Common myeloid progenitor, CD34-positive (primary cell): ENCODE measurements at regions of chr5 and their contacts with region 1.

Region 1: GRCh38 chr5:151126199-151126645 is 31.4 kb downstream of the ANXA6 start:
- DNase-seq: peak; percentile 50 to 67 (median 58)
- H3K4me3 ChIP-seq: no peak overlapping the region
- H3K27ac ChIP-seq: peak overlapping the region in 1 of 2 experiments; percentile 2
- H3K4me1 ChIP-seq: peaks cover 0 to 21% (median 11%) of the 10 kb centered on the region in 4 experiments
- H3K27me3 ChIP-seq: no peaks in the 10 kb centered on the region

Region 2: GRCh38 chr5:151080623-151081430 is 45.4 kb before region 1 on chr5 and contains the start of gene TNIP1:
- CTCF ChIA-PET with region 1: interaction called, 1,757 read pairs
- POLR2A ChIA-PET with region 1: no interaction called
- DNase-seq: peak; percentile 89 to 96 (median 95)
- H3K4me3 ChIP-seq: peak within 1 kb of the TSS; percentile 77 to 90 (median 83)
- H3K27ac ChIP-seq: peak within 1 kb of the TSS; percentile 99
- H3K4me1 ChIP-seq: peaks cover 20 to 68% (median 57%) of the 10 kb centered on the region in 4 experiments
- H3K27me3 ChIP-seq: no peaks in the 10 kb centered on the region

Region 3: GRCh38 chr5:151141535-151141934 is 15.3 kb after region 1 on chr5:
- CTCF ChIA-PET with region 1: interaction called, 54 read pairs
- POLR2A ChIA-PET with region 1: interaction called, 3 read pairs
- DNase-seq: peak in 2 of 3 donors; percentile 35 to 43
- H3K4me3 ChIP-seq: peak overlapping the region in 2 of 7 experiments; percentile 6 to 21
- H3K27ac ChIP-seq: peak overlapping the region in 1 of 2 experiments; percentile 51
- H3K4me1 ChIP-seq: peaks cover 3 to 40% (median 16%) of the 10 kb centered on the region in 4 experiments
- H3K27me3 ChIP-seq: no peaks in the 10 kb centered on the region

Region 4: GRCh38 chr5:151157426-151158286 is 31.4 kb after region 1 on chr5 and contains the start of gene ANXA6:
- CTCF ChIA-PET with region 1: interaction called, 558 read pairs
- POLR2A ChIA-PET with region 1: interaction called, 4 read pairs
- DNase-seq: peak; percentile 64 to 81 (median 74)
- H3K4me3 ChIP-seq: peak within 1 kb of the TSS; percentile 77 to 94 (median 81)
- H3K27ac ChIP-seq: peak within 1 kb of the TSS; percentile 51 to 71
- H3K4me1 ChIP-seq: peaks cover 6 to 59% (median 56%) of the 10 kb centered on the region in 4 experiments
- H3K27me3 ChIP-seq: no peaks in the 10 kb centered on the region

Region 5: DNA sequence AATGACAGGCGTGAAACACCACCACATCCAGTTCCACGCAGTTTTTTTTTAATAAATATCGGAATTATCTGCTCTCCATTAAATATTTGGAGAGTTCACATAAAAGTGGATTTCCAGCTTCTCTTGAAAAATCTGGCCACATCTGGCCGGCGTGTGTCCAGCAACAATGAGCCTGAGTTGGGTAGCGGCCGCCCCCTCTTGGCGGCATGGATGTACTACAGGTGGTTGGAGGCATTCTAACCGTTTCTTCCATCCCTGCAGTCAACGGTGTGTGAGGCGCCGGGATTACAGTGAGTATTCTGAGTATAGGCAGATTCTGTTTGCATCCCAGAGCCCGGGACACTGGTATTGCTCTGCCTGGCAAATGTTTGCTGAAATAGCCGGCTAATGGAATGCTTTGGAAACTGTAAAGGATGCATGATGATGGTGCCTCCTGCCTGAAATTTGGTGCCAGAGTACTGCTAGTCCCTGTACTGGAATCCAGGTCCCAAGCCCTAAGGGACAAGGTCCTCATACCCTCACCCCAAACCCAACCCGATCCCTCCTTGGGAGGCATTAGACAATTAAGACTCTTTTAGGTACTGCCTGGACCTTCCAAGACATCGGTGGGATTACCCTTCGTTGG is 113.1 kb after region 1 on chr5:
- CTCF ChIA-PET with region 1: interaction called, 49 read pairs
- POLR2A ChIA-PET with region 1: no interaction called
- DNase-seq: peak in 1 of 3 donors; percentile 31
- H3K4me3 ChIP-seq: no peak overlapping the region
- H3K27ac ChIP-seq: no peak overlapping the region
- H3K4me1 ChIP-seq: peaks cover 3 to 14% (median 12%) of the 10 kb centered on the region in 4 experiments
- H3K27me3 ChIP-seq: no peaks in the 10 kb centered on the region